Dendritic cell treated with granulocyte-macrophage colony-stimulating factor and Interleukin-4, amounts not matched to agents 40 ng/mL and 50 ng/mL, for 4 days (primary cell): ENCODE measurements at regions of chr13 and their contacts with region 1.

Region 1: DNA sequence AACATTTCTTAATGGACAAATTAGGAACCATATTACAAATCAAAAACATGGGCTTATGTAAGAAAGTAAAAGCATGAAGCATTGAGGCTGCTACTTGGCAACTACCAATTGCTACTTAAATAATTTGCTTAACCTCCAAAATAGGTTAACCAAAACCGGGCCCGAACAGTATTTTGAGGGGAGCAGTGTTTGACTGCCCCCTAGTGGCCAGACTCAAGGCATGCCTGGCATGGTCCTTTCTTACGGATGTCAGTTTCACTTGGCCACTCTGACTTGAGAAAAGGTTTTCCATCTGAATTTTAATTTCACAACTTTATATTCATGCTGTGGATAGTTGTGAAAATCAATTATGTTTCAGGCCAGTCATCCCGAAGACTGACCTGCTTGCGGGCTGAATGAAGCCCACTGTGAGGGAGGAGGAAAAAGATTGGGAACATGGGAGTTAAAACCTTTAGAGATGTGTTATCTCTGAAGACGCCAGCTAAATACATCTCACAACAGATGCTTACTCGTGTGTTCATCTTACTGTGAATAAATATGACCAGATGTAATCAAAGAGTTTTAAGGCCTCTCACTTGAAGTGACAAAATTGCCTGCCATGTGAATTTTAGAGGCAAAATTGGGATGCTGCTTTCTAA is 2.9 kb downstream of the RXFP2 start:
- H3K4me3 Mint-ChIP-seq: no peak overlapping the region
- H3K27ac Mint-ChIP-seq: no peak overlapping the region
- H3K4me1 Mint-ChIP-seq: peaks cover 9% of the 10 kb centered on the region
- H3K27me3 Mint-ChIP-seq: no peaks in the 10 kb centered on the region

Region 2: GRCh38 chr13:31236211-31236786 is 505.9 kb before region 1 on chr13:
- intact Hi-C with region 1: loop called (anchors 5 kb)
- H3K4me3 Mint-ChIP-seq: no peak overlapping the region
- H3K27ac Mint-ChIP-seq: no peak overlapping the region
- H3K4me1 Mint-ChIP-seq: no peaks in the 10 kb centered on the region
- H3K27me3 Mint-ChIP-seq: no peaks in the 10 kb centered on the region

Region 3: DNA sequence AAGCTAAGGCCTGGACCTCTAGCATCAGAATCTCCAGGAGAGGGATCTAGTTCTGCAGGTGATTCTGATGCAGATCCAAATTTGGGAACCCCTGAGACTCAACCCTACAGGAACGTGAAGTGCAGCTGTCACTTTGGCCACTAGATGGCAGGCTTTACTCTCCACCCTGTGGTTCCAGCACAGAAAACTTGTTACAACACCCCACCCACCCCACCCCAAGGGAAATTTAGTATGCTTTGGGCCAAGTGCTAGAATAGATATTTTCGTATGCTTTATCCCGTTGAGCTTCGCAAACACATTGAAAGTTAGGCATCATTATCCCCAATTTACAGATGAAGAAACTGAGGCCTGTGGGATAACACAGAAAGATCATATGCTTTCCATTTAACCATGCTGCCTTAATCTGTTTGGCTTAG is 310.5 kb before region 1 on chr13:
- intact Hi-C with region 1: loop called (anchors 1 kb)
- H3K4me3 Mint-ChIP-seq: no peak overlapping the region
- H3K27ac Mint-ChIP-seq: no peak overlapping the region
- H3K4me1 Mint-ChIP-seq: peaks cover 8% of the 10 kb centered on the region
- H3K27me3 Mint-ChIP-seq: peaks cover 8% of the 10 kb centered on the region

Region 4: GRCh38 chr13:31538067-31539042 is 203.9 kb before region 1 on chr13:
- intact Hi-C with region 1: loop called (anchors 1 kb)
- H3K4me3 Mint-ChIP-seq: no peak overlapping the region
- H3K27ac Mint-ChIP-seq: no peak overlapping the region
- H3K4me1 Mint-ChIP-seq: no peaks in the 10 kb centered on the region
- H3K27me3 Mint-ChIP-seq: peaks cover 8% of the 10 kb centered on the region

Region 5: DNA sequence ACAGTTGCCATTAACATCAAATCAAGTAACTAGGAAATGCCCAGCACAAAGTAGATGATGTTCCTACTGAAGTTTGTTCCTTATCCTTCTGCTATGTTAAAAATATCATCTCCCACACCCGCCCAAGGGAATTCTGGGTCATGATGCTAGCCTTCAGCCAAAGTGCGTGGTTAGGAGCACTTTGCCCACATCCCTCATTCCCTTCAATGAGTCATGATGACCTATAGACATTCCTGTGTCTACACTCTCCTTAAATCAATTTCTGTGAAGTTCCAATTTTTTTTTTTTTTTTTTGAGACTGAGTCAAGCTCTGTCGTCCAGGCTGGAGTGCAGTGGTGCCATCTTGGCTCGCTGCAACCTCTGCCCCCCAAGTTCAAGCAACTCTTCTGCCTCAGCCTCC is 14.1 kb after region 1 on chr13:
- intact Hi-C with region 1: no loop called
- H3K4me3 Mint-ChIP-seq: no peak overlapping the region
- H3K27ac Mint-ChIP-seq: no peak overlapping the region
- H3K4me1 Mint-ChIP-seq: no peaks in the 10 kb centered on the region
- H3K27me3 Mint-ChIP-seq: peaks cover 2% of the 10 kb centered on the region